Transverse colon (tissue), 4 donors: ENCODE measurements at regions of chr6 and their contacts with region 1.

Region 1: DNA sequence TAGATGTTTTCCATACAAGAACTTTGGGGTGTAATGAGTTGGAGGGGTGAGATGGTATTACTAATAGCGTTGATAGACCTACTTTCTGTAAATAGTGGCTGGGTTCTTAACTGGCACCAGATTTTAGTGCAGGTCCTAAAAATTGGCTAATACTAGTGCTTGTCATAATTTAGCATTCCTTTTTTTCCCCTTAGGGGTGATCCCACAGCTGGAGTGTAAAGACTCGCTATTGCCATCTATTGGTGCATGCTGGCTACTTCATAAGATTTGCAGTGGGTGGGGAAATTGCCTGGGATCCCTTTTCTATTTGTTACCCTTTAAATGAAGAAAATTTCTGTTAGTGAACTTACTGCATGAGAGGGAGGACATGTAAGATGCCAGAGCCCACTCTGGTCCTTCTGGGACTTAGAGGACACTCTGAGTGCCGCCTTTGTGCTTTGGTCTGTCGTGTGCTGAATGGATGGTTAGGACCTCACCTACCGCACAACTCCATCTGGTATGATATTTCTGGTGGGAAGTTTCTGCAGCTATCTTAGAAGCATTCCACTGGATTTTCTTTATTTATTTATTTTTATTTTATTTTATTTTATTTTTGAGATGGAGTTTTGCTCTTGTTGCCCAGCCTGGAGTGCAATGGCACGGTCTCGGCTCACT is 195.5 kb downstream of the JARID2 start:
- DNase-seq: peak; percentile 35
- H3K4me3 ChIP-seq: no peak overlapping the region
- H3K27ac ChIP-seq: no peak overlapping the region
- H3K4me1 ChIP-seq: peaks cover 0 to 63% (median 12%) of the 10 kb centered on the region in 4 donors
- H3K27me3 ChIP-seq: no peaks in the 10 kb centered on the region
- CTCF ChIP-seq: peak; percentile 66 to 81 (median 77)
- EP300 ChIP-seq: no peak
- POLR2A ChIP-seq: no peak

Region 2: DNA sequence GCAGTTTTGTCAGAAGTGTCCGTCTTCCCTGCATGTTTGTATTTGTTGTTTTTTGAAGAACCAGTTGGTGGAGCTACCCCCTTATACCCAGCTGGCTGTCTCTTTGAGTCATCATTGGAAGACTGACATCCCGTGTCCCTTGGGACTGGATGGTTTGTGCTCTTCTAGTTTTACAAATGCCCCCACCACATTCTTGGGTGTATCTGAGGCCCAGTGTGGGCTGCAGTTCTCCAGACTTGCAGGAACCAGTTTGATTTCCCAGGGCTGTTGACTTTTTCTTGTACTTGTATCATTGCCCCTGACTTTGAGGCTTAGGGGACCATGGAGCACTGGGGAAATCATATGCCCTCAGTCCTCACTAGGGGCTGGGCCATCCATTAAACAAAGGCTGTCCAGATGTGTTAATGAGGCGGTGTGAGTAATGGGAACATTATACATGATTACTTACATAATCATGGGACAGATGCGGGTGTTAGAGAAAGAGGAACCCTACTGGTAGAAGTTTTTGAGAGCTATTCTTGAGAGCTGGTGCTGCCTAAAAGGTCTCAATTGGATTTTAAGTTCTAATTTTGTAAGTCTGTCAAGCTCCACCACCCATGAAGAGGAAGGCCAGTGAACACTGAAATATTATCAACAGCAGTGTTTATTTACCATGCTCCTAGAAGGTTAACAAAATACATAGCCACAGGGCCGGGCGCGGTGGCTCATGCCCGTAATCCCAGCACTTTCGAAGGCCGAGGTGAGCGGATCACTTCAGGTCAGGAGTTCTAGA is 187.1 kb before region 1 on chr6:
- in situ Hi-C with region 1: loop called in 1 of 4 experiments (anchors 25 kb)
- intact Hi-C with region 1: no loop called
- DNase-seq: no peak
- H3K4me3 ChIP-seq: no peak overlapping the region
- H3K27ac ChIP-seq: no peak overlapping the region
- H3K4me1 ChIP-seq: peaks cover 10 to 68% (median 52%) of the 10 kb centered on the region in 4 donors
- H3K27me3 ChIP-seq: no peaks in the 10 kb centered on the region
- CTCF ChIP-seq: no peak
- EP300 ChIP-seq: no peak
- POLR2A ChIP-seq: no peak